ENCODE measurements at regions of chr10 and their contacts with region 1.

Region 1: GRCh38 chr10:100433253-100434240 is 29.3 kb upstream of the WNT8B start:
- DNase-seq: peak; percentile 83
- H3K4me3 ChIP-seq: no peak overlapping the region
- H3K27ac ChIP-seq: no peak overlapping the region
- H3K4me1 ChIP-seq: peaks cover 5% of the 10 kb centered on the region
- H3K27me3 ChIP-seq: no peaks in the 10 kb centered on the region
- CTCF ChIP-seq: peak; percentile 97 to 100

Region 2: DNA sequence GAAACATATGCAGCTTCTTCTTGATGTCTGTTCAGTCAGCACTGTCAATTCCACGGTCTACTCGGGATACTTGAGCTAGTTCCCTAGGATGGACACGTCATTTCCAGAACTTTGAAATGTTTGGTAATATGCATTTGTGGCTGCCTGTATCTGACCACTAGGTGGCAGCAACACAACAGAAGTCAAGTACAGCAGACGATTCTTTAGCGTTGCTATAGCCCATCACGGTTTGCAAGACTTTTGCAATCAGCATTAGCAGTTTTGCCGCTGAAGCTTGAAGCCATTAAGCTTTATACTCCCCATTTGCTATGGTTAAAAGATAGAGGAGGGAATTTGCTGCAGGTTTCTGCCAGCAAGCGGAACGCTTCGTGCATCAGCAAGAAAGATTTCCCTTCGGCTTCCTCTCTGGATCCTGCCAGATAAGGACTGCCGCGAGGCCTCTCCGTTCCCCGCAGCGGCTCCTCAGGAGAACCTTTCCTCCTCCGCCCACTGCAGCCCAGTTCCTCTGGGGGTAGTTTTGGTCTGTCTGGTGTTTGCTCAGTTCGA is 587.6 kb before region 1 on chr10:
- CTCF ChIA-PET with region 1: interaction called, 4 read pairs
- dilution Hi-C with region 1: no loop called
- in situ Hi-C with region 1: no loop called
- intact Hi-C with region 1: loop called (anchors 2 kb)
- DNase-seq: peak; percentile 86
- H3K4me3 ChIP-seq: no peak overlapping the region
- H3K27ac ChIP-seq: no peak overlapping the region
- H3K4me1 ChIP-seq: no peaks in the 10 kb centered on the region
- H3K27me3 ChIP-seq: no peaks in the 10 kb centered on the region
- CTCF ChIP-seq: peak; percentile 90 to 98

Region 3: GRCh38 chr10:100229819-100230422 is 203.6 kb before region 1 on chr10:
- CTCF ChIA-PET with region 1: no interaction called
- dilution Hi-C with region 1: no loop called
- in situ Hi-C with region 1: no loop called
- intact Hi-C with region 1: no loop called
- DNase-seq: no peak
- H3K4me3 ChIP-seq: peak overlapping the region; percentile 53 to 82 (median 77)
- H3K27ac ChIP-seq: peak overlapping the region; percentile 71
- H3K4me1 ChIP-seq: peaks cover 4% of the 10 kb centered on the region
- H3K27me3 ChIP-seq: no peaks in the 10 kb centered on the region
- CTCF ChIP-seq: no peak

Region 4: DNA sequence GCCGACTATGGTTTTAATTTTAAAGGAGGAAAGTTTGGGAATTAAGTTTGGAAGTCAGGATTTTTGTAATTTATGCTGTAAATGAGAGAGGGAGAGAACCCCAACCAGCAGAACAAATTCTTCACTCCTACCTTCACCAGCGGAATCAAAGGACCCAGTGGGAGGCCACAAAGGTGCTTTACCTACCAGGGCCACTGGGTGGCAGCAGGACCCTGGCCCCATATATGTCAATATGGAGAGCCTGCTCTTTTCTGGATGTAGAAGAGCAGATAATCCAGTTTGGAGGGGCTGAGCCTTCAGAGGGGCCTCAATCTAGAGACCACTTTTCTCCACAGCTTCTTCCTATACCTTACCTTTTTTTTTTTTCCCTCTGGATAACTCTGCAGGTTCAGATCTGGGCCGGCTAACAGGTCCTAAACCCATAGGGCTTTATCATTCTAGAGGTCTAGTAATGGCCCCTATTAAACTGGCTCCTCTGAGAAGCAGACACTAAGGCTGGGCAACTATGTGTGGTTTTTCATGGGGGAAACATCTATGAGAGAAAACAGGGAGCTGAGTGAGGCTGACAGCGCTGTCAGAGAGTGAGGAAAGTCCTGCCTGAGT is 95.0 kb before region 1 on chr10:
- CTCF ChIA-PET with region 1: interaction called, 4 read pairs
- dilution Hi-C with region 1: loop called (anchors 5 kb)
- in situ Hi-C with region 1: loop called (anchors 5 kb)
- intact Hi-C with region 1: loop called (anchors 1 kb)
- DNase-seq: peak; percentile 38
- H3K4me3 ChIP-seq: no peak overlapping the region
- H3K27ac ChIP-seq: no peak overlapping the region
- H3K4me1 ChIP-seq: no peaks in the 10 kb centered on the region
- H3K27me3 ChIP-seq: no peaks in the 10 kb centered on the region
- CTCF ChIP-seq: peak; percentile 89 to 95

Region 5: DNA sequence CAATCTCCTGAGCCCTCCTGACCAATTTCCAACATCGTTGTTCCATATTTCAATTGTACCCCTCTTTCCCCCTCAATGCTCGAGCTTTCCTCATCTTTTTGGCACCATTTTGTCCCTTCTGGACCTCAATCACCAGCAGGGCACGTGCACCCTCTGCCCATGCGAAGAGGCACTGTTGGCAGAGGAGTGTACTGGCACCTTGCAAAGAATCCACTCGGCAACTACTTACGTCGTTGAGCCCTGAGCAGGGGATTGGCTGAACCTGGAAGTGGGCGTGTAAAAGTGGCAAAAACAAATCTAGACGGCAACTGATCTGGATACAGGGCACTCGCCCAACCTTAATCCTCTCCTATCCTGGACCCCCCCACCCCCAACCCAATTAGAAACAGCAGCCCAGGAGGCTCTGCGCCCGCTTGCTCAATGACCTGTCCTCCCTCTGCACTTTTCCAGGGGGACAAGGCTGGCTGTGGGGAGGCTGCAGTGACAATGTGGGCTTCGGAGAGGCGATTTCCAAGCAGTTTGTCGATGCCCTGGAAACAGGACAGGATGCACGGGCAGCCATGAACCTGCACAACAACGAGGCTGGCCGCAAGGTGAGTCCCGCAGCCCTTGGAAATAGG is 48.0 kb after region 1 on chr10:
- CTCF ChIA-PET with region 1: no interaction called
- dilution Hi-C with region 1: no loop called
- in situ Hi-C with region 1: no loop called
- intact Hi-C with region 1: loop called (anchors 1 kb)
- DNase-seq: peak; percentile 82
- H3K4me3 ChIP-seq: peak overlapping the region; percentile 12 to 47 (median 40)
- H3K27ac ChIP-seq: no peak overlapping the region
- H3K4me1 ChIP-seq: peaks cover 8% of the 10 kb centered on the region
- H3K27me3 ChIP-seq: no peaks in the 10 kb centered on the region
- CTCF ChIP-seq: no peak

Region 6: DNA sequence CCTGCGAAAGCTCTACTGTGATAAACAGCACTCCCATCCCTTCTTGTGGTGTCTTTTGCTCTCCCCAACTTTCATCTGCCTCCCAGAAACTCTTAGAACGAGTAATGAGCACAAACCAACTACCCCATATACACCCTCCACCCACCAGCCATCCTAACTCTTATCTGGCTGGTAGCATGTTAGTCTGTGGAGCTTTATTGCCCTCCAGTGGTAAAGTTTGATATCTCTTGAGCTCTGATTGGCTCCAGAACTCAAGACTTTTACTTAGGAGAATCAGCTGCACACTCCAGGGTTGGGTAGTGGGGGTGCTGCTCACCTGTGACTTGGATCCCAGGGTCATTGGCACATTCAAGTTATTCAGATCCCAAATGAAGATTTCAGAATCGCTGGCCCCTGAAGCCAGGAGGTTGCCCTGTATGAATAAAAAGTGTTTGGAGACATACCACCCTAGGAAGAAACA is 75.2 kb after region 1 on chr10:
- CTCF ChIA-PET with region 1: interaction called, 5 read pairs
- dilution Hi-C with region 1: no loop called
- in situ Hi-C with region 1: loop called in 1 of 2 experiments (anchors 5 kb)
- intact Hi-C with region 1: loop called (anchors 1 kb)
- DNase-seq: peak; percentile 47
- H3K4me3 ChIP-seq: no peak overlapping the region
- H3K27ac ChIP-seq: no peak overlapping the region
- H3K4me1 ChIP-seq: peaks cover 32% of the 10 kb centered on the region
- H3K27me3 ChIP-seq: no peaks in the 10 kb centered on the region
- CTCF ChIP-seq: peak; percentile 77 to 79

Region 7: GRCh38 chr10:100743626-100744135 is 310.1 kb after region 1 on chr10:
- CTCF ChIA-PET with region 1: no interaction called
- dilution Hi-C with region 1: no loop called
- in situ Hi-C with region 1: no loop called
- intact Hi-C with region 1: loop called (anchors 5 kb)
- DNase-seq: peak; percentile 41
- H3K4me3 ChIP-seq: no peak overlapping the region
- H3K27ac ChIP-seq: no peak overlapping the region
- H3K4me1 ChIP-seq: no peaks in the 10 kb centered on the region
- H3K27me3 ChIP-seq: peaks cover 91% of the 10 kb centered on the region
- CTCF ChIP-seq: peak; percentile 63 to 87

Region 8: DNA sequence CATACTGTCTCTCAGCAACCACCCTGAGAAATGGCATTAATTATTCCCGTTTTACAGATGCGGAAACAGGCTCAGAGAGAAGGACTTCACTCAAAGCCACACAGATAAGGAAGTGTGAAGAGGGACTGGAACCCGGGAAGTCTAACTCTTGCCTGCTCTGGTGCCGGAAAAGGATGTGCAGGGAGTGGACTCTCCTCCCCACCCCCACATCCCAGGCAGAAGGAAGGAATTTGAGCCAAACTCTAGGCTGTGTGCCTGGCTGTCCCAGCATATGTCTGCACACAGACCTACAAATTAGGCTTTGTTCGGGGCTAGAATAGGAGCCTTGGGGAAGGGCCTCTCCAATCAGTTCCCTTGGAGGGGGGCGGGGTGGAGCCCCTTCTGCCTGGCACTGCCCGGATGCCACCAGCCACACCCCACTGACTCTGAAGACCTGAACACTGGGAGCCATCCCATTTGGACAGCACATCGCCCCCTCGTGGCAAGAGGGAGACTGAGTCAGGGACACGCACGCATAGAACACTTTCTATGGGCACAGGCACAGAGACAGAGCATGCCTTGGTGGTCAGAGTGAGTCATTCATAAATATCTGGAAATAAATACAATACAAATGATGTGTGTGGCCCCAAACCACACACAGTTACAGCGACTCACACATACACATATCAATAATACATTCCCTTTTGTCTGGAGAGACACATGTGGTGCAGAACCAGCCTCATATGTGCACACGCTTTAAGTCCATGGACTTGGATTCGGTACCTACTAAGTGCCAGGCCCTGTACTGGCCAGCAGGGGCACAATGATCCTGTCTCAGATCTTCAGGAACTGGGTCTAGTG is 579.2 kb after region 1 on chr10:
- CTCF ChIA-PET with region 1: no interaction called
- dilution Hi-C with region 1: no loop called
- in situ Hi-C with region 1: no loop called
- intact Hi-C with region 1: loop called (anchors 5 kb)
- DNase-seq: peak; percentile 93
- H3K4me3 ChIP-seq: no peak overlapping the region
- H3K27ac ChIP-seq: peak overlapping the region; percentile 30
- H3K4me1 ChIP-seq: peaks cover 54% of the 10 kb centered on the region
- H3K27me3 ChIP-seq: no peaks in the 10 kb centered on the region
- CTCF ChIP-seq: peak; percentile 76